HEK293 (cell line): ENCODE measurements at regions of chr16 and their contacts with region 1.

Region 1: GRCh38 chr16:84186685-84187437 is at the start of gene TAF1C:
- H3K4me3 ChIP-seq: peak within 1 kb of the TSS; percentile 93
- H3K27ac ChIP-seq: peak within 1 kb of the TSS; percentile 48; the same call in 1 of the 2 replicates
- H3K4me1 ChIP-seq: no peaks in the 10 kb centered on the region
- CTCF ChIP-seq: peak; percentile 94

Region 2: GRCh38 chr16:83779886-83780285 is 407.0 kb before region 1 on chr16:
- CTCF ChIA-PET with region 1: no interaction called
- POLR2A ChIA-PET with region 1: no interaction called
- H3K4me3 ChIP-seq: no peak overlapping the region
- H3K27ac ChIP-seq: no peak overlapping the region
- H3K4me1 ChIP-seq: peaks cover 5% of the 10 kb centered on the region; the same call in 1 of the 2 replicates
- CTCF ChIP-seq: no peak

Region 3: DNA sequence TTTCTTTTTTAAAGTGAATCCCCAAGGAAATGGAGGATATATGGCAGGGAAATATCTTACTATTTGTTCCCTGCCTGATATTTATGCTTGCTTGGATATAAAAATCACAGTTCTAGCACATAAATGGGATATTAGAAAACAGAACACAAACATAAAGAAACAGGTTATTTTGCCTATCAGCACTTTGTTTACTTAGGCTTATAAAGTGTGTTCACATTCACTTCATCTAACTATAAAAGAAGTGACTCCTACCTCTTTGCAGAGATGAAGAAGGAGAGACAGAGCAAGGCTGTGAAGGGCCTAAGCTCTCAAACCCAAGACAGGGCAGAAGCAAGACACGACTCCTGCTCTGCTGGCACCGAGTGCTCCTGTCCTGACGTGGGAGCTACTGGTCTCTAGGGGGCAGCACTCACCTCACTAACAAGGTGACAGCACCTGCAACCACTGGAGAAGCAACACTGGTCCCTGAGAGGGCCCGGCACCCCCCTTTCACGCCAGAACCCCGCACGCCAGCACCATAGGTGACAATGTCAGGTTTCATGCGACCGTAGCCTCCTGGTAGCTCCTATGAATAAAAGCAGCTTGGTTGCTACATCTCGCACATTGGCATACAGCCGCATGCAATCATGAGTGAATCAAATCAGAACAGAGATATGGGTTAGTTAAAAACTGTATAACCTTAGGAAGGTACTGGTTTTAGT is 102.1 kb before region 1 on chr16:
- CTCF ChIA-PET with region 1: interaction called, 31 read pairs
- POLR2A ChIA-PET with region 1: interaction called, 3 read pairs
- H3K4me3 ChIP-seq: no peak overlapping the region
- H3K27ac ChIP-seq: no peak overlapping the region
- H3K4me1 ChIP-seq: no peaks in the 10 kb centered on the region
- CTCF ChIP-seq: peak; percentile 74

Region 4: GRCh38 chr16:84116720-84117493 is 70.0 kb before region 1 on chr16 and contains the start of gene MBTPS1:
- CTCF ChIA-PET with region 1: interaction called, 10 read pairs
- POLR2A ChIA-PET with region 1: interaction called, 13 read pairs
- H3K4me3 ChIP-seq: peak within 1 kb of the TSS; percentile 82
- H3K27ac ChIP-seq: peak within 1 kb of the TSS; percentile 79
- H3K4me1 ChIP-seq: no peaks in the 10 kb centered on the region
- CTCF ChIP-seq: peak; percentile 28; the same call in 1 of the 2 replicates

Region 5: GRCh38 chr16:84138824-84139627 is 47.8 kb before region 1 on chr16:
- CTCF ChIA-PET with region 1: interaction called, 12 read pairs
- POLR2A ChIA-PET with region 1: no interaction called
- H3K4me3 ChIP-seq: no peak overlapping the region
- H3K27ac ChIP-seq: peak overlapping the region; percentile 10; the same call in 1 of the 2 replicates
- H3K4me1 ChIP-seq: peaks cover 7% of the 10 kb centered on the region; the same call in 1 of the 2 replicates
- CTCF ChIP-seq: no peak

Region 6: DNA sequence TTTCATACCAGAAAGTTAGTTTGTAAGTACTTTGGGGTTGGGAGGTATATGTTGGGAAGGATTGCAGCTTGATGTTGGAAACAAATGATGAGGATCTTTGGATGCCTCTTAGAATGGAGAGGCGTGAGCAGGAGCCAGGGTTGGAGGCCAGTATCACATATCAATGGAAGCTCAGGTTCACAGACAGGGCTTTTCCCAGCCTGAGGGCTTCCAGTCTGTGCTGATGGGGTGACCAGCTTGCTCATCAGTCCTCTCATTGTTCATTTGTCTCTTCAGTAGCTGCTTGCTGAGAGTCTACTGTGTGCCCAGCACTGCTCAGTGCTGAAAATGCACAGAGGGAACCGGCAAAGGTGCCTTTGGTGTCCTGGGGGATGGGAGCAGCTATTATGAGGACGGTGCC is 35.9 kb before region 1 on chr16:
- CTCF ChIA-PET with region 1: interaction called, 12 read pairs
- POLR2A ChIA-PET with region 1: no interaction called
- H3K4me3 ChIP-seq: no peak overlapping the region
- H3K27ac ChIP-seq: no peak overlapping the region
- H3K4me1 ChIP-seq: no peaks in the 10 kb centered on the region; the same call in 1 of the 2 replicates
- CTCF ChIP-seq: no peak

Region 7: DNA sequence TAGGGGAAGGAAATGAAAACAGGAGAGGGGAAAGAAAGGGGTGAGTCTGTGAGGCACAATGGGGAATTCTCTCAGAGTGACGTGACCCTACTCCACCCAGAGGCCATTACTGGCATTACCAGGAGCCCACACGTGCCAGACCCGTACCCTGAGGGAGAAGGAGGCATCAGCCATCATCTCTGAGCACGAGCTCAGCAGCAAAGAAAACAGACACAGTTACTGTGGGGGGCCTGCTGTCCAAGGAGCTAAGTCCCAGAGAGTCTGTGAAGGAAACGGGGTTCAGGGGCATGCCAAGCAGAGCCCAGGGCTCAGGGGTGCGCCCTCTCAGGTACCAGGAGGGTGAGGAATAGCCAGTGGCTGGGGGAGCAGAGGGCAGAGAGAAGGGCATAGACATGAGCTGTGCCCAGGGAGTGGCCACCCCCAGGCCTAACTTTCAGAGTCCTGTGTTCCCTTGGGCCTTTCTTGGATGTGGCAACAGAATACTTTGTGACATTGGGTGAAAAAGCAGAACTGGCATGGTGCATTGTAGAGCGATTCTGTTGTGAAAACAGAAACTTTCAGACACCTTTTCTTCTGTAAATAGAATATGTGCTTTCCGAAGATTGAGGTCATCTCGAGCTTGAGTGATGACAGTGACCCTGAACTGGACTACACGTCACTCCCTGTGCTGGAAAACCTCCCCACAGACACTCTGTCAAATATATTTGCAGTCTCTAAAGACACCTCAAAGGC is 11.3 kb before region 1 on chr16:
- CTCF ChIA-PET with region 1: interaction called, 33 read pairs
- POLR2A ChIA-PET with region 1: interaction called, 7 read pairs
- H3K4me3 ChIP-seq: no peak overlapping the region
- H3K27ac ChIP-seq: no peak overlapping the region
- H3K4me1 ChIP-seq: peaks cover 9% of the 10 kb centered on the region
- CTCF ChIP-seq: peak; percentile 67